Panc1 (cell line): ENCODE measurements at regions of chr19 and their contacts with region 1.

Region 1: DNA sequence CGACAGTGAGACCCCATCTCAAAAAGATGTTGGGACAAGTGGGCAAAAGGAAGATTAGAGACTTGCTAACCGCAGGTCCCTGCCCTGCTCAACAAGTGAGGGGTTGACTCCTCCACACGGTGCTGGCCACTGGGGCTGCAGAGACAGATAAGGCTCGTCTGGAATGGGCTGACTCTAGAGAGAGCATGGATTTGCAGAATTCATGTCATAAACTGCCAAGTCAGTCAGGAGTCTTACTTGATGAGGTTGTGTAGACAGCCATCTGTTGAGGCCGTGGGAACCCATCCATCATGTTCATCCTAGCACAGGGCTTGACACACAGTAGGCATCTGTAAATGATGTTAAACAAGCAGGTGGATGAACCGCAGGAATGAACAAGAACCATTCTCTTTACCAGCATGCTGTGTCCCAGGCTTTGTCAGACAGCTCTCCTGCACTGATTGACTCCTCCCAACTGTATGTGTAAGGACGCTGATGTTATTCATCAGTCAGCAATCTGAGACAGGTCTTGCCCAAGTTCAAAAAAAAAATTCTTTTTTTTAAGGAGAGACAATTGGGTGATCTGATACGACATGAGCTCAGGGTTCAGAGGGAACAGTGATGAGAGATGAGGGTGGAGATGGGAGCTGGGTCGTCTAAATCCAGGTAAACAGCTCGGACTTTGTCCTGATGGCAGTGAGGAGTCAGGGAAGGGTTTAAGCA is 8.8 kb downstream of the PAF1 start:
- DNase-seq: no peak
- ATAC-seq: 0 out of 2 replicates have a peak, but pooled peaks have one; percentile 4
- H3K4me3 ChIP-seq: no peak overlapping the region
- H3K27ac ChIP-seq: no peak overlapping the region
- H3K4me1 ChIP-seq: peaks cover 21% of the 10 kb centered on the region
- H3K27me3 ChIP-seq: no peaks in the 10 kb centered on the region
- CTCF ChIP-seq: no peak

Region 2: DNA sequence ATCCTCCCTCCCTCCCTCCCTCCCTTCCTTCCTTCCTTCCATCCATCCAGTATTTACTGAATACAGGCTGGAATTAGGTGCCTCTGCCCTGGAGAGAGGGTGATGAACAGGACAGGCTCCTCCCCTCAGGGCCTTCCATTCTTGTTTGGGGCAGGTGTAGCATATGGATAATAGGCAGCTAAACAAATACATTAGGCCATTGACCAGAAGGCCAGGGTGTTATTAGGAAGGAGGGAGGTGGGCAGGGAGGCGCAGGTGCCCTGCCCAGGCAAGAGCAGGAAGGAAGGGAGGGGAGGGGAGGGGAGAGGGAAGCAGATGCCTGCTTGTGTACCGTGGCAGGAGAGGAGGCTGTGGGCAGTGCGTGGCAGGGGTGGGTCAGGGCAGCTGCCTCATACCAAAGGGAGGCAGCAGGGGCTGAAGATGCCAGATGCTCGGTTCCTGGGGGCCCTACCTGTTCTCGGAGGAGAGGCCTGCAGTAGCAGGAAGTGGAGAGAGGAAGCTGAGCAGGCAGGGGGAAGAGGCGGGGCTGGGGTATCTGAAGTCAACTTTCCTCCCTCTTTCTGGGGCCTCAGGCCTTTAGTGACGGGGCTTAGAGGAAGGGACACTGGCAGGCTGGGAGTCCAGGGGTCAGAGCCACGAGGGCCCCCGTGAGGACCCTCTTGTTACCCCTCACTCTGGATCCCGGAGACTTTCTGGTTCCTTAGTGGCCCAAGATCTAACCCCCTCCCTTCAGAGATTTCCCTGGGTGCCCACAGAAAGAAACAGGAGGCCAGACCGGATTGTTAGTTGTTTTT is 504.1 kb before region 1 on chr19 and contains the start of gene RINL:
- CTCF ChIA-PET with region 1: no interaction called
- POLR2A ChIA-PET with region 1: interaction called, 11 read pairs
- in situ Hi-C with region 1: no loop called
- intact Hi-C with region 1: no loop called
- DNase-seq: no peak
- ATAC-seq: peak; percentile 35
- H3K4me3 ChIP-seq: no peak within 1 kb of the TSS
- H3K27ac ChIP-seq: peak within 1 kb of the TSS; percentile 5; the same call in 1 of the 2 replicates
- H3K4me1 ChIP-seq: peaks cover 7% of the 10 kb centered on the region; the same call in 1 of the 2 replicates
- H3K27me3 ChIP-seq: no peaks in the 10 kb centered on the region
- CTCF ChIP-seq: no peak
- total RNA-seq, gene RINL: 1.3 TPM

Region 3: DNA sequence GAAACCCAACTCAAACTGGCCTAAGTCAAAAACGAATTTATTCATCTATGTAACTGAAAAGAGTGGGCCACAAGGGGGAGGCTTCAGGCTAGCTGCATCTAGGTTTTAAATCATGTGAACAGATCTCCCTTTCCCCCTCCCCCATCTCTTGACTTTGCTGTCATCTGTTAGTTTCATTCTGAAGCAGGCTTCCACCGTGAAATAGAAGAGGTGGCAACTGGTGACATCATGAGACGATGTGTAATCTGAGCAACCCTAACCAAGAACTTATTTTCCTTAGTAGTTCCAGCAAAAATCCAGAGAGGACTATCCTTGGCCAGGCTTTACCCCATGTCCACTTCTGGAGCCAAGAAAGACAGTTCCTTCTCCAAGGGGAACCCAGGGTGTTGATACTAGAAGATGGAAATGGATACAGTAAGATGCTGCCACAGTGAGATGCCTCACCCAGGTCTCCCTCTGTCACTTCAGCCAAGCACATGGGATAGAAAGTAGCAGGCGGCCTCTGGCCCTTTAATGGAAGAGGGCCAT is 30.5 kb before region 1 on chr19:
- CTCF ChIA-PET with region 1: interaction called, 10 read pairs
- POLR2A ChIA-PET with region 1: interaction called, 10 read pairs
- in situ Hi-C with region 1: no loop called
- intact Hi-C with region 1: no loop called
- DNase-seq: no peak
- ATAC-seq: peak; percentile 6
- H3K4me3 ChIP-seq: no peak overlapping the region
- H3K27ac ChIP-seq: no peak overlapping the region
- H3K4me1 ChIP-seq: no peaks in the 10 kb centered on the region
- H3K27me3 ChIP-seq: no peaks in the 10 kb centered on the region
- CTCF ChIP-seq: no peak

Region 4: DNA sequence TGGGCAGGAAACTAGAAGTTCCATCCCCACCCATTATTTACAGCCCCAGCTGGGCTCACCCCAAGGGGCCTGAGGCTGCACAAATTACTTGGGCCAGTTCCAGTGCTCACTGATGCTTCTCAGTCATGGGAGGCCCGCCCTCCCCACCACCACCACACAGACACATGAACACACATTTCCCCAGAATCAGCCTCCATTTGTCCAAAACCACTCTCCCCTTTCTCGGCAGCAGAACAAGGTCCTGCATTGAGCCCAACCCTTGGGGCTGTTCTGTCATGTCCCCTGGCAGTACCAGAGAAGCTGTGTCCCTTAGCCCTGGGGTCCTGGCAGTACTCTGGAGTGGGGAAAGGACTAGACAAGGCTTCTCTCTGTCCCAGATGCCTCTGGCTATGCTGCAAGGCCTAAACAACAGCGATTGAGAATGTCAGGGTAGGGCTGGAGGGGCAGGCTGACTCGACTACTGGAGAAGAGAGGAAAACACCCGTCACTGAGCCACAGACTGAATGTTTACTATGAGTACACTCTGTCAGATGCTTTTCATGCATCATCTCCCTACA is 18.1 kb before region 1 on chr19:
- CTCF ChIA-PET with region 1: interaction called, 4 read pairs
- POLR2A ChIA-PET with region 1: interaction called, 12 read pairs
- in situ Hi-C with region 1: no loop called
- intact Hi-C with region 1: no loop called
- DNase-seq: no peak
- ATAC-seq: peak; percentile 1; the same call in 1 of the 2 replicates
- H3K4me3 ChIP-seq: no peak overlapping the region
- H3K27ac ChIP-seq: no peak overlapping the region
- H3K4me1 ChIP-seq: peaks cover 5% of the 10 kb centered on the region; the same call in 1 of the 2 replicates
- H3K27me3 ChIP-seq: no peaks in the 10 kb centered on the region
- CTCF ChIP-seq: no peak

Region 5: GRCh38 chr19:39996811-39997594 is 614.9 kb after region 1 on chr19 and contains the start of gene ZNF546:
- CTCF ChIA-PET with region 1: no interaction called
- POLR2A ChIA-PET with region 1: no interaction called
- in situ Hi-C with region 1: no loop called
- intact Hi-C with region 1: no loop called
- DNase-seq: peak; percentile 100
- ATAC-seq: peak; percentile 98
- H3K4me3 ChIP-seq: peak within 1 kb of the TSS; percentile 35 to 49
- H3K27ac ChIP-seq: peak within 1 kb of the TSS; percentile 83
- H3K4me1 ChIP-seq: peaks cover 19% of the 10 kb centered on the region
- H3K27me3 ChIP-seq: no peaks in the 10 kb centered on the region
- CTCF ChIP-seq: no peak
- total RNA-seq, gene ZNF546: 68.4 TPM